B cell (primary cell): ENCODE measurements at regions of chr3 and their contacts with region 1.

Region 1: DNA sequence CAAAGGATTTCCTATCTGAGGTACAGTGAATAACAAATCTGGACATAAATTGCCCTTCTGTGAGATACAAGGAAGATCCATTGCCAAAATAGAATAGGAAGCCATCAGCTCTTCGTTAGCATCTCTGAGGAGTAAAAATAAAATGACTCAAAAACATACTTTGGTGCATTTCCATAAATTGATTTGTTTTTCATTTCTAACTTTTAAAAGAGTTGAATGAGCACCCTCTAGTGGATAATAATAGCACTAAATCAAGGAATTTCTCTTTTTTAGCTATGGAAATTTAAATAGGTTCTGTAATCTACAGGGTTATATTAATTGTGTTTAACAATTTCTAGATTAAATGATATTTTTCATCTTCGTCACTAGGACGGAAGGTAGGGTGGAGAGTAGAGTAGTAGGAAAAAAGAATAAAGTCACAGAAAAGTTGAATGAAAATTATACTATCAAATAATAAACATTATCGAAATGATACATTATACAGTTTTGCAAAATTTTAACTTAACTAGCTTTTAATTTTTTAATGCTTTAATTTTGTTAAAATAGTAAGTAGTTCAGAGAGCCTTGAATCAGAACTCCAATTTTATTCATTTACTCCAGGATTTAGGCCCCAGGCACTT is 6.4 kb downstream of the NSUN3 start:
- DNase-seq: peak; percentile 39
- ATAC-seq: no peak
- H3K4me3 ChIP-seq: no peak overlapping the region
- H3K4me3 Mint-ChIP-seq: no peak overlapping the region
- H3K27ac ChIP-seq: no peak overlapping the region
- H3K27ac Mint-ChIP-seq: no peak overlapping the region
- H3K4me1 ChIP-seq: peaks cover 4 to 17% of the 10 kb centered on the region in 2 donors
- H3K4me1 Mint-ChIP-seq: peaks cover 39% of the 10 kb centered on the region
- H3K27me3 ChIP-seq: no peaks in the 10 kb centered on the region
- H3K27me3 Mint-ChIP-seq: no peaks in the 10 kb centered on the region
- CTCF ChIP-seq: peak; percentile 86

Region 2: DNA sequence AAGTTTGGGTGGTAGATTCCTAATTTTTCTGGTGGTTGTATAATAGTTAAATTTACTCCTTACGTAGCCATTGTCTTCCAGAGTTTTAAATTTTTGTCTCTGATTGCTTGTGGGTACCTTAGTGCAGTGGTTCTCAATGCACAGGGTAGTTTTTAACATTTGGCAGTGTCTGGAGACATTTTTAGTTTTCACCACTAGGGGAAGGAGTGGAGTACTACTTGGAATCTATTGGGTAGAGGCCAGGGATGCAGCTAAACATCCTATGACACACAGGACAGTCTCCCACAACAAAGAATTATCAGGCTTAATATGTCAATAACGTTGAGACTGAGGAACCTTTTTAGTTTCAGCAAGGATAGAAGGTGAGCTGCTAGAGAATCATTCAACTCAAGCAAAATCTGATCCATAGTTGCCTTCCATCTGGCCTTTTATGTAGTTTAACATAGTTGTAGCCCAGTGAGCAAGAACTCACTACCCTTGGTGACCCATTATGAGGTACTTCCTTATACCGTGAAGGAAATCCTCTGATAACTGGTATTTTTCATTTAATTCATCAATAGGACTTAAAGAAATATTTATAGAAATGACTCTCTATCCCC is 32.3 kb before region 1 on chr3:
- CTCF ChIA-PET with region 1: interaction called, 10 read pairs
- POLR2A ChIA-PET with region 1: no interaction called
- intact Hi-C with region 1: no loop called
- DNase-seq: no peak
- ATAC-seq: peak; percentile 17
- H3K4me3 ChIP-seq: no peak overlapping the region
- H3K4me3 Mint-ChIP-seq: no peak overlapping the region
- H3K27ac ChIP-seq: no peak overlapping the region
- H3K27ac Mint-ChIP-seq: no peak overlapping the region
- H3K4me1 ChIP-seq: no peaks in the 10 kb centered on the region
- H3K4me1 Mint-ChIP-seq: no peaks in the 10 kb centered on the region
- H3K27me3 ChIP-seq: no peaks in the 10 kb centered on the region
- H3K27me3 Mint-ChIP-seq: no peaks in the 10 kb centered on the region
- CTCF ChIP-seq: peak; percentile 50

Region 3: GRCh38 chr3:94115482-94115881 is 46.2 kb after region 1 on chr3:
- CTCF ChIA-PET with region 1: no interaction called
- POLR2A ChIA-PET with region 1: no interaction called
- intact Hi-C with region 1: no loop called
- DNase-seq: no peak
- ATAC-seq: no peak
- H3K4me3 ChIP-seq: no peak overlapping the region
- H3K4me3 Mint-ChIP-seq: no peak overlapping the region
- H3K27ac ChIP-seq: no peak overlapping the region
- H3K27ac Mint-ChIP-seq: no peak overlapping the region
- H3K4me1 ChIP-seq: no peaks in the 10 kb centered on the region
- H3K4me1 Mint-ChIP-seq: no peaks in the 10 kb centered on the region
- H3K27me3 ChIP-seq: no peaks in the 10 kb centered on the region
- H3K27me3 Mint-ChIP-seq: no peaks in the 10 kb centered on the region
- CTCF ChIP-seq: no peak

Region 4: DNA sequence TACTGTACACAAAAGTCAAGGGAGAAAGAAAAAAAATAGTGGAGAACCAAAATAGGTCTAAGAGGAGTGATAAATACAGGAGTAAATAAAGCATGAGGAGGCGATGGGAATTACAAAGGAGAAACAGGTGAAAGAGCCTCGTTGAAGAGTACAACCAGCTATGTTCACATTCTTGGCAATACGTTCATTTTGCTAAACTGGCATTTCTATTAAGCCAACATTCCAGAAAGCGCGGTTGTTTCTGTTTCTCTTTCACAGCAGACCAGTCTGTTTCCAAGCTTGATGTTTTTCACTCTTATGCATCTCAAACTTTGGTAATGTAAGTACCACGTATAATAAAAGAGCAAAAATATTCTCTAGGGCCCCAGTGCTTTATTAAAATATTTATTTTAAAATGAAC is 68.1 kb after region 1 on chr3:
- CTCF ChIA-PET with region 1: no interaction called
- POLR2A ChIA-PET with region 1: no interaction called
- intact Hi-C with region 1: no loop called
- DNase-seq: no peak
- ATAC-seq: no peak
- H3K4me3 ChIP-seq: no peak overlapping the region
- H3K4me3 Mint-ChIP-seq: no peak overlapping the region
- H3K27ac ChIP-seq: no peak overlapping the region
- H3K27ac Mint-ChIP-seq: no peak overlapping the region
- H3K4me1 ChIP-seq: no peaks in the 10 kb centered on the region
- H3K4me1 Mint-ChIP-seq: no peaks in the 10 kb centered on the region
- H3K27me3 ChIP-seq: no peaks in the 10 kb centered on the region
- H3K27me3 Mint-ChIP-seq: no peaks in the 10 kb centered on the region
- CTCF ChIP-seq: no peak

Region 5: DNA sequence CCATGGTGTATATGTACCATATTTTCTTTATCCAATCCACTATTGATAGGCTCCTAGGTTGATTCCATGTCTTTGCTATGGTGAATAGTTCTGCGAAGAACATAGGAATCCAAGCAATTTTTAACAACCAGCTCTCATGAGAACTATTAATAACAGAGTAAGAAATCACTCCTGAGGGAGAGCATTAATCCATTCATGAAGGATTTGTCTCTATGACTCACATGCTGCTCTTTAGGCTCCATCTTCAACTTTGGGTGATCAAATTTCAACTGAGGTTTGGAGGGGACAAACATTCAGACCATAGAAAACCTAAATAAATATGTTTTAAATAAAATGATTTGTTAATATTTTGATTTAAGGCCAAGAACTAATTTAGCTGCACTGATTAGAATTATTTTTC is 141.0 kb after region 1 on chr3:
- CTCF ChIA-PET with region 1: no interaction called
- POLR2A ChIA-PET with region 1: no interaction called
- intact Hi-C with region 1: no loop called
- DNase-seq: no peak
- ATAC-seq: no peak
- H3K4me3 ChIP-seq: no peak overlapping the region
- H3K4me3 Mint-ChIP-seq: no peak overlapping the region
- H3K27ac ChIP-seq: no peak overlapping the region
- H3K27ac Mint-ChIP-seq: no peak overlapping the region
- H3K4me1 ChIP-seq: no peaks in the 10 kb centered on the region
- H3K4me1 Mint-ChIP-seq: no peaks in the 10 kb centered on the region
- H3K27me3 ChIP-seq: no peaks in the 10 kb centered on the region
- H3K27me3 Mint-ChIP-seq: no peaks in the 10 kb centered on the region
- CTCF ChIP-seq: no peak